ENCODE measurements at regions of chr5 and their contacts with region 1.

Region 1: GRCh38 chr5:80860924-80861613 is 99.1 kb upstream of the RASGRF2 start:
- DNase-seq: peak; percentile 47 to 60
- H3K4me3 ChIP-seq: no peak overlapping the region
- H3K4me3 Mint-ChIP-seq: peak overlapping the region; percentile 38
- H3K27ac Mint-ChIP-seq: peak overlapping the region; percentile 85
- H3K4me1 ChIP-seq: peaks cover 54% of the 10 kb centered on the region
- H3K4me1 Mint-ChIP-seq: peaks cover 39% of the 10 kb centered on the region
- H3K27me3 ChIP-seq: no peaks in the 10 kb centered on the region
- H3K27me3 Mint-ChIP-seq: no peaks in the 10 kb centered on the region
- CTCF ChIP-seq: no peak

Region 2: DNA sequence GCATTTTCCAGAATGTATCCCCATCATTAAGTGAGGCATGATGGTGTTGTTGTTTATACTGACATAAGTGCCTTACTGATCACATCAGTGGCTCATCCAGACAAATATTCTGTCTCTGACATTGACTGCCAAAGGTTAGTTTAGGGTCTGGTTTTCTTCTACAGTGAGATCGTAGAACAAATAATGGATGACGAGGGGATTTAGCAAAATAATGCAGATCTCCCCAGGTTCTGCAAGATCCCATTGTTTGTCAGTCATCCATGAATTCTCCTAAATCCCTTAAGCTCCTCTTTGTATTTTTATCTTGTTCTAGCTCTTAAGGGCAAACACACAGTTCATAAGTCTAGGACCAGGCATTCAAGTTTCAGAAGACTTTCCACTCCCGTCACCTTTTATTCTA is 113.1 kb before region 1 on chr5:
- CTCF ChIA-PET with region 1: interaction called, 3 read pairs
- POLR2A ChIA-PET with region 1: no interaction called
- intact Hi-C with region 1: loop called (anchors 1 kb)
- DNase-seq: peak in 1 of 2 experiments; percentile 64
- H3K4me3 ChIP-seq: no peak overlapping the region
- H3K4me3 Mint-ChIP-seq: no peak overlapping the region
- H3K27ac Mint-ChIP-seq: no peak overlapping the region
- H3K4me1 ChIP-seq: peaks cover 19% of the 10 kb centered on the region
- H3K4me1 Mint-ChIP-seq: peaks cover 8% of the 10 kb centered on the region
- H3K27me3 ChIP-seq: no peaks in the 10 kb centered on the region
- H3K27me3 Mint-ChIP-seq: no peaks in the 10 kb centered on the region
- CTCF ChIP-seq: no peak

Region 3: DNA sequence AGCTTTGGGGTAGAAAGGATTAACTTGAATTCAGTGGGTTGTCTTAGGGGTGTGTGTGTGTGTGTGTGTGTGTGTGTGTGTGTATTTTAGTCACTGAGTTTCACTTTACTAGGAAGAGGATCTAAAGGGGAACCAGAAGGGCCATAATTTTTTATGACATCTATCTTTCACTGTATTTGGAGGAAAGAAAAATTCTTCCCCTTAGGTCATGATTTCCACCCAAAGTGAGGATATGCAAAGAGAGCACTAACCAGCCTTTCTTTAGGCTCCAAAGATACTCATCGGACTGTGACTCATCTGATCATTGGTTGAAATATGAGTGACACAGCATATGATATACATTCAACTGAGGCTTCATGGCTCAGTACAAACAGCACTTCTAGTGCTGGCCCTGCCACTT is 23.9 kb after region 1 on chr5:
- CTCF ChIA-PET with region 1: no interaction called
- POLR2A ChIA-PET with region 1: no interaction called
- intact Hi-C with region 1: loop called (anchors 2 kb)
- DNase-seq: no peak
- H3K4me3 ChIP-seq: no peak overlapping the region
- H3K4me3 Mint-ChIP-seq: peak overlapping the region; percentile 3
- H3K27ac Mint-ChIP-seq: peak overlapping the region; percentile 89
- H3K4me1 ChIP-seq: peaks cover 29% of the 10 kb centered on the region
- H3K4me1 Mint-ChIP-seq: peaks cover 33% of the 10 kb centered on the region
- H3K27me3 ChIP-seq: no peaks in the 10 kb centered on the region
- H3K27me3 Mint-ChIP-seq: no peaks in the 10 kb centered on the region
- CTCF ChIP-seq: no peak